ENCODE measurements at regions of chr6 and their contacts with region 1.

Region 1: GRCh38 chr6:117974914-117975627 is 68.0 kb downstream of the SLC35F1 start:
- DNase-seq: no peak
- H3K4me3 ChIP-seq: no peak overlapping the region
- H3K27ac ChIP-seq: no peak overlapping the region
- H3K4me1 ChIP-seq: no peaks in the 10 kb centered on the region
- H3K27me3 ChIP-seq: no peaks in the 10 kb centered on the region
- CTCF ChIP-seq: no peak
- EP300 ChIP-seq: no peak
- POLR2A ChIP-seq: no peak

Region 2: DNA sequence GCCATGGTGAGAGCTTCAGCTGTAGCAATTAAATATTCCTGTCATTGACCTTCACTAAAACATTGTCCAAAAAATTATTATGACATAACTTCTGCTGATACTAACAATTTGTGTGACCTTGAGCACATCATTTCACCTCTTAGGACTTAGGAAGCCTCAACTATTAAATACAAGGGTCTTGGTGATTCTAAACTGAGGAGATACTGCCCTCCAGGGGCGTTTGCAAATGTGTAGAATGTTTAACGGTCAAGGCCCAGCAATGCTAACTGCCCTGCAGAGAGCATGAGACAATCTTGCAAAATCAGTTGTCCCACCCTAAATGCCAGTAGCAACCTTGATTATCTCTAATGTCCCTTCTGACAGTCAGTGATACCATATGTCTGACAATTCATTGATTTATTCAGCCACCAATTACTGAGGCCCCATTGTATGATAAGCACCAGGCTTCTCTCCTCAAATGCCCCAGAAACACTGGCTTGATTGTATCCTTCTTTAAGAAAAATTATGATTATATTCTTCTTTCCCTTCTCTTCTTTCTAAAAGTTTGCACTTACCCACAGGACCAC is 288.9 kb after region 1 on chr6:
- intact Hi-C with region 1: loop called (anchors 5 kb)
- DNase-seq: no peak
- H3K4me3 ChIP-seq: no peak overlapping the region
- H3K27ac ChIP-seq: no peak overlapping the region
- H3K4me1 ChIP-seq: no peaks in the 10 kb centered on the region
- H3K27me3 ChIP-seq: no peaks in the 10 kb centered on the region
- CTCF ChIP-seq: peak; percentile 29 to 34 (median 33)
- EP300 ChIP-seq: no peak
- POLR2A ChIP-seq: no peak

Measured in esophagus muscularis mucosa (tissue), 4 donors.